K562 (cell line): ENCODE measurements at regions of chr7 and their contacts with region 1.

Region 1: DNA sequence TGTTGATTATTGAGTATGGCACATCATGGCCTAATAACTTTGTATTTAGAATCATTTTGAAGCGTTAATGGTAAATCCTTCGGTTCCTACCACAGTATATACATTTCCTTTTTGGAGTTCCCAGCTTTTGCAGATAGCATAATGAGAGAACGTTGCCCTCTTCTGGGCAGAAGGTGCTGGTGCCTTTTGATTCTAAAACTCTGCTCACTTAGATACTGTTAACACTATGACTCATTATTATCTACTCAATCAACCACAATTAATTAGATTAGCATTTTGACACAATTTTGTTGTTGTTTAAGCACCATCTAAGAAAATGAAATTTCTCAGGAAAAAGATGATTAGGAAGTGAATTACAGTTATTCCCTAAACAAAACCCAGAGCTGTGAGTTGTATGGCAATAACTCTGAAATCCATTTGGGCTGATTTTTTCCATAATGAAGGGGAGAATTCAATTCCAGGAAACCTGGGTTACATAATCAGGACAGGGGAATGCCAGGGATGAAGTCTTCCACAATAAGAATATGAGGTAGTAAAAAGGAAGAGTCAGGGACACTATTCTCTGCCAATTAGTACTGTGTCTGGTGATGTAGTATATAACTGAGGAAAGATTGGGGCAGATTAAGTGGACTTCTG is 11.5 kb upstream of the DLD start:
- DNase-seq: peak; percentile 57 to 78 (median 66)
- ATAC-seq: peak; percentile 88
- H3K4me3 ChIP-seq: no peak overlapping the region
- H3K27ac ChIP-seq: no peak overlapping the region
- H3K4me1 ChIP-seq: peaks cover 0 to 2% of the 10 kb centered on the region in 2 experiments; a peak in 1 of 5 replicates
- H3K27me3 ChIP-seq: peaks cover 2 to 13% of the 10 kb centered on the region in 2 experiments; a peak in 3 of 5 replicates
- CTCF ChIP-seq: peak; percentile 77 to 95 (median 89)
- EP300 ChIP-seq: peak; percentile 41; the same call in 1 of the 2 replicates
- POLR2A ChIP-seq: no peak
- RAD21 ChIP-seq: peak; percentile 94 to 95

Region 2: DNA sequence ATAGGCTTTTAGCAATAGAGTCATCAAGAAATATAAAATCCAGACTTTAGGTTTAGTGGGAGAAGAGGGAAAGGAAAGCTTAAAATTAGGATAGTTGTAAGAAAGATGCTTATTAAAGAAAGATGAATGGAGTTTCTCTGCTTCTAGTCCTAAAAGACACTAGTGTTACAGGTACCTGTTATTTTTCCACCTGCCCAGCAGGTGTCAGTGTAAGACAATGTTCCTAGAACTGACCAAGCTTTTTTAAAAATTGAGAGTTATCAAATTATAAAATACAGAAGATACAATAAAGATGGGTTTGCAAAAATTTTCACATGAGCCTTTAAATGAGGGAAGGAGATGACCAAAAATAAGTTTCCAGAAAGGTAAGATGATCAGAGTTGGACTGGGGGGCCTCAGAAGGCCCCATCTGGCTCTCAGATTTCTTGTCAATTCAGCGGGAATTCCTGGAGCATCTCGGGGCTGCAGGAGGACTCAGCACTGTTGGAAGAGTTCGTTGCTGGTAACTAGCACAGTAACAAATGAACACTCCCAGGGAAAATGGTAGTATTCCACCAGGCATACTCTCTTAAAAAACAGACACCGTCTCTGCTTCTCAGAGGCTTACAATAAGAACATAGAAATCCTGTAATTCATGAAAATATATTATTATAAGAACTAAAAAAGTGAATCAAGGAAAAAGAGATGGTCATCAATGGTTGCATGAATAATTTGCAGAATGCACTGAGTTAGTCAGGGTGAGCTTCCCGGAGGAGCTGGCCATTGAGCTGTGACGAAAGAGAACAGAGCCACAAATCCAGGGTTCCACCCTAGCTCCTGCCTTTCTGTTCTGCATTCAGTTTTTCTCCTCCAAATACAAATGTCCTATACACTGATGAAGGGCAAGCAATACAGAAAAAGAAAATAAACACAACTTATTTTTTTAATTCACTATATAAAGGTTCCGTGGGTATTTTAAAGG is 1086.2 kb before region 1 on chr7:
- CTCF ChIA-PET with region 1: no interaction called
- POLR2A ChIA-PET with region 1: no interaction called
- in situ Hi-C with region 1: no loop called
- intact Hi-C with region 1: loop called (anchors 10 kb)
- DNase-seq: peak; percentile 59 to 78 (median 63)
- ATAC-seq: peak; percentile 53
- H3K4me3 ChIP-seq: no peak overlapping the region
- H3K27ac ChIP-seq: no peak overlapping the region
- H3K4me1 ChIP-seq: peaks cover 0 to 5% of the 10 kb centered on the region in 2 experiments; a peak in 1 of 5 replicates
- H3K27me3 ChIP-seq: no peaks in the 10 kb centered on the region
- CTCF ChIP-seq: peak; percentile 59 to 93 (median 74); a peak in 5 of 6 replicates
- EP300 ChIP-seq: no peak
- POLR2A ChIP-seq: no peak
- RAD21 ChIP-seq: peak; percentile 91 to 94

Region 3: GRCh38 chr7:107450970-107451369 is 428.5 kb before region 1 on chr7:
- CTCF ChIA-PET with region 1: no interaction called
- POLR2A ChIA-PET with region 1: no interaction called
- in situ Hi-C with region 1: loop called (anchors 10 kb)
- intact Hi-C with region 1: no loop called
- DNase-seq: no peak
- ATAC-seq: no peak
- H3K4me3 ChIP-seq: no peak overlapping the region
- H3K27ac ChIP-seq: no peak overlapping the region
- H3K4me1 ChIP-seq: no peaks in the 10 kb centered on the region
- H3K27me3 ChIP-seq: no peaks in the 10 kb centered on the region
- CTCF ChIP-seq: no peak
- EP300 ChIP-seq: no peak
- POLR2A ChIP-seq: no peak
- RAD21 ChIP-seq: no peak

Region 4: DNA sequence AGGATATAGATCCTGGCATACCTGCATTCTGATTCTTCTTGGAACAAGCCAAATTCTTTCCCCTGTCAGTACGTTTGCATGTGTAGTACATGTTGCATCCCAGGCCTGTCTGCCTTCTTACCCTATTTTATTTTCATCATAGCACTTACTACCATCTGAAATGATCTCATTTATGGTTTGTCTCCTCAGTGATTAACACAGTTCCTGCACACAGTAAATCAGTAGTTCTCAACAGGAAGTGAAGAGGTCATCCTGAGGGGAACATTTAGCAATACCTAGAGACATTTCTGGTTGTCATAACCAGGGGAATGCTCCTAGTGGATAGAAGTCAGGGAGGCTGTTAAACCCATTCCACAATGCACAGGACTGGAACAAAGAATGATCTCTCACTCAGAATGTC is 257.1 kb before region 1 on chr7:
- CTCF ChIA-PET with region 1: no interaction called
- POLR2A ChIA-PET with region 1: no interaction called
- in situ Hi-C with region 1: no loop called
- intact Hi-C with region 1: loop called (anchors 10 kb)
- DNase-seq: no peak
- ATAC-seq: peak; percentile 45
- H3K4me3 ChIP-seq: no peak overlapping the region
- H3K27ac ChIP-seq: no peak overlapping the region
- H3K4me1 ChIP-seq: no peaks in the 10 kb centered on the region
- H3K27me3 ChIP-seq: no peaks in the 10 kb centered on the region
- CTCF ChIP-seq: no peak
- EP300 ChIP-seq: no peak
- POLR2A ChIP-seq: no peak
- RAD21 ChIP-seq: no peak

Region 5: GRCh38 chr7:107694386-107694785 is 185.1 kb before region 1 on chr7:
- CTCF ChIA-PET with region 1: no interaction called
- POLR2A ChIA-PET with region 1: no interaction called
- in situ Hi-C with region 1: no loop called
- intact Hi-C with region 1: no loop called
- DNase-seq: no peak
- ATAC-seq: no peak
- H3K4me3 ChIP-seq: no peak overlapping the region
- H3K27ac ChIP-seq: no peak overlapping the region
- H3K4me1 ChIP-seq: no peaks in the 10 kb centered on the region; a peak in 2 of 5 replicates
- H3K27me3 ChIP-seq: peaks cover 19 to 29% of the 10 kb centered on the region in 2 experiments; a peak in 4 of 5 replicates
- CTCF ChIP-seq: no peak
- EP300 ChIP-seq: no peak
- POLR2A ChIP-seq: no peak
- RAD21 ChIP-seq: no peak

Region 6: DNA sequence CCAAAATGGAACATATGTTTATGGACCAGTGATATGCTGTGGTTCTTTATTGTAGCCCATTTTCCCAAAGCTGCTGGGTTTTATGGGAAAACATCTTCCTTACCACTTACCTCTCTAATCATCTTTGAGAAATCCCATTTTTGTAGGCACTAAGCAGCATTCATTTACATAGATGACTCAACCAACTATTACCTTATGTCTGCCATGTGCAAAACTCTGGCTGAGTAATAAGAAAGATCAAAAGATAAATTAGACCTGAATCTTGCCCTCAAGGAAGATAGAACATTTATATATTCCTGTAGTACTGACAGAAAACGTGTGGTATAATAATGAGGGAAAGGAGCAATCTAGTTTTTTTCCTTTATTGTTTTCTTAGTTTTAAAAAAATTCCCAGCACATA is 111.2 kb before region 1 on chr7:
- CTCF ChIA-PET with region 1: no interaction called
- POLR2A ChIA-PET with region 1: no interaction called
- in situ Hi-C with region 1: no loop called
- intact Hi-C with region 1: loop called (anchors 5 kb)
- DNase-seq: no peak
- ATAC-seq: no peak
- H3K4me3 ChIP-seq: no peak overlapping the region
- H3K27ac ChIP-seq: no peak overlapping the region
- H3K4me1 ChIP-seq: no peaks in the 10 kb centered on the region
- H3K27me3 ChIP-seq: peaks cover 14 to 16% of the 10 kb centered on the region in 2 experiments; a peak in 3 of 5 replicates
- CTCF ChIP-seq: no peak
- EP300 ChIP-seq: no peak
- POLR2A ChIP-seq: no peak
- RAD21 ChIP-seq: no peak

Region 7: DNA sequence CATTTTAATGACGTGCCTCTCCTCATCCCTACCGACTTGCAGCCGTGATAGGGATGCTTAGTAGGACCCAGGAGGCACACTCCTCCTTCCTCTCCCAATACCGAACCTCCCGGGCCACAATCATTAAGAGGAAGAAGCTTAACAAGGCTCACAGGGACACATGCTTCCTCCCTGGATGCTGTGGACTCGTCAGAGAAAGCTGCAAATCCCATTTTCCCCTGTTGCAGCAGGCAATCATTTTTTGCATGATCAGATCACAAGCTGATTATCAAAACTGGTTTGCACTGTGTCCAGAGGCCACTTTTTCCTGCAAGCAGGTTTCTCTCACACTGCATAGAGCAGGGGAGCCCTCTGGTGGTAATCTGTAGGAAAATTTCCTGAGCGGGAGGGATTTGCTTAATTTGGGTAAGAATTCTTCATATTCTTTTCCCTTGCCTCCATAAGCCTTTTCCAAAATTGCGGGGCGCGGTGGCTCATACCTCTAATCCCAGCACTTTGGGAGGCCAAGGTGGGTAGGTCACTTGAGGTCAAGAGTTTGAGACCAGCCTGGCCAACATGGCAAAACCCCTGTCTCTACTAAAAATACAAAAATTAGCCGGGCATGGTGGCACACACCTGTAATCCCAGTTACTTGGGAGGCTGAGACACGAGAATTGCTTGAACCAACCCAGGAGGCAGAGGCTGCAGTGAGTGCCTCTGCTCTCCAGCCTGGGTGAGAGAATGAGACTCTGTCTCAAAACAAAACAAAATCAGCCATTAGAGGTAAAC is 266.7 kb after region 1 on chr7:
- CTCF ChIA-PET with region 1: interaction called, 3 read pairs
- POLR2A ChIA-PET with region 1: no interaction called
- in situ Hi-C with region 1: no loop called
- intact Hi-C with region 1: loop called (anchors 1 kb)
- DNase-seq: peak; percentile 54 to 88 (median 66)
- ATAC-seq: peak; percentile 83
- H3K4me3 ChIP-seq: no peak overlapping the region
- H3K27ac ChIP-seq: no peak overlapping the region
- H3K4me1 ChIP-seq: 0 out of 5 replicates have a peak, but pooled peaks cover 0 to 3% of the 10 kb centered on the region in 2 experiments
- H3K27me3 ChIP-seq: peaks cover 0 to 4% of the 10 kb centered on the region in 2 experiments; a peak in 2 of 5 replicates
- CTCF ChIP-seq: peak; percentile 93 to 98 (median 94)
- EP300 ChIP-seq: no peak
- POLR2A ChIP-seq: no peak
- RAD21 ChIP-seq: peak; percentile 99 to 100

Region 8: GRCh38 chr7:108561047-108561619 is 681.6 kb after region 1 on chr7:
- CTCF ChIA-PET with region 1: no interaction called
- POLR2A ChIA-PET with region 1: no interaction called
- in situ Hi-C with region 1: no loop called
- intact Hi-C with region 1: no loop called
- DNase-seq: no peak
- ATAC-seq: 0 out of 3 replicates have a peak, but pooled peaks have one; percentile 11
- H3K4me3 ChIP-seq: no peak overlapping the region
- H3K27ac ChIP-seq: no peak overlapping the region
- H3K4me1 ChIP-seq: no peaks in the 10 kb centered on the region; a peak in 1 of 5 replicates
- H3K27me3 ChIP-seq: no peaks in the 10 kb centered on the region
- CTCF ChIP-seq: no peak
- EP300 ChIP-seq: no peak
- POLR2A ChIP-seq: peak; percentile 32; the same call in 1 of the 2 replicates
- RAD21 ChIP-seq: no peak